Activated CD4-positive, alpha-beta memory T cell treated with anti-CD3 and anti-CD28 coated beads for 36 hours (primary cell): ENCODE measurements at regions of chr9 and their contacts with region 1.

Region 1: GRCh38 chr9:6055213-6055612 is 39.8 kb upstream of the RANBP6 start:
- DNase-seq: no peak
- H3K4me3 Mint-ChIP-seq: no peak overlapping the region
- H3K27ac Mint-ChIP-seq: no peak overlapping the region
- H3K4me1 Mint-ChIP-seq: peaks cover under 1% of the 10 kb centered on the region
- H3K27me3 Mint-ChIP-seq: no peaks in the 10 kb centered on the region

Region 2: GRCh38 chr9:5799314-5799713 is 255.9 kb before region 1 on chr9:
- CTCF ChIA-PET with region 1: interaction called, 6 read pairs
- POLR2A ChIA-PET with region 1: no interaction called
- intact Hi-C with region 1: loop called (anchors 5 kb)
- DNase-seq: no peak
- H3K4me3 Mint-ChIP-seq: no peak overlapping the region
- H3K27ac Mint-ChIP-seq: no peak overlapping the region
- H3K4me1 Mint-ChIP-seq: peaks cover 22% of the 10 kb centered on the region
- H3K27me3 Mint-ChIP-seq: no peaks in the 10 kb centered on the region

Region 3: GRCh38 chr9:6024020-6024554 is 31.1 kb before region 1 on chr9:
- CTCF ChIA-PET with region 1: interaction called, 14 read pairs
- POLR2A ChIA-PET with region 1: no interaction called
- intact Hi-C with region 1: no loop called
- DNase-seq: peak; percentile 36
- H3K4me3 Mint-ChIP-seq: peak overlapping the region; percentile 23
- H3K27ac Mint-ChIP-seq: no peak overlapping the region
- H3K4me1 Mint-ChIP-seq: peaks cover 4% of the 10 kb centered on the region
- H3K27me3 Mint-ChIP-seq: peaks cover 5% of the 10 kb centered on the region

Region 4: DNA sequence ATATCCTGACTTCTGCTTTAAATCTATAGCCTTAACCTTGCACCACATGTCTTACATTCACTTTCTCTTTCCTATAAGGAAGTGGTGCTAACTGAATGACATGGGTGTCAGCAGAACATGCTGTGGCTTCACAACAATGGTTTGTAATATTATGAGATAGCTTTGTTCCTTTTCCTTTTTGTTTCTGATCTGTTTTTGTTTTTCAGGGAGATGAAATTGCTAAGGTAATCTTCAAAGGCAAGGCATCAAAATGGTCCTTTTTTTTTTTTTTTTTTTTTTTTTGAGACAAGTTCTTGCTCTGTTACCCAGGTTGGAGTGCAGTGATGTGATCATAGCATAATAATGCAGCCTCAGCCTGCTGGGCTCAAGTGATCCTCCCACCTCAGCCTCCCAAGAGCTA is 13.8 kb after region 1 on chr9:
- CTCF ChIA-PET with region 1: interaction called, 28 read pairs
- POLR2A ChIA-PET with region 1: no interaction called
- intact Hi-C with region 1: no loop called
- DNase-seq: no peak
- H3K4me3 Mint-ChIP-seq: no peak overlapping the region
- H3K27ac Mint-ChIP-seq: peak overlapping the region; percentile 66
- H3K4me1 Mint-ChIP-seq: peaks cover 18% of the 10 kb centered on the region
- H3K27me3 Mint-ChIP-seq: no peaks in the 10 kb centered on the region

Region 5: GRCh38 chr9:6114424-6114823 is 59.2 kb after region 1 on chr9:
- CTCF ChIA-PET with region 1: no interaction called
- POLR2A ChIA-PET with region 1: no interaction called
- intact Hi-C with region 1: no loop called
- DNase-seq: no peak
- H3K4me3 Mint-ChIP-seq: no peak overlapping the region
- H3K27ac Mint-ChIP-seq: no peak overlapping the region
- H3K4me1 Mint-ChIP-seq: peaks cover 8% of the 10 kb centered on the region
- H3K27me3 Mint-ChIP-seq: no peaks in the 10 kb centered on the region

Region 6: DNA sequence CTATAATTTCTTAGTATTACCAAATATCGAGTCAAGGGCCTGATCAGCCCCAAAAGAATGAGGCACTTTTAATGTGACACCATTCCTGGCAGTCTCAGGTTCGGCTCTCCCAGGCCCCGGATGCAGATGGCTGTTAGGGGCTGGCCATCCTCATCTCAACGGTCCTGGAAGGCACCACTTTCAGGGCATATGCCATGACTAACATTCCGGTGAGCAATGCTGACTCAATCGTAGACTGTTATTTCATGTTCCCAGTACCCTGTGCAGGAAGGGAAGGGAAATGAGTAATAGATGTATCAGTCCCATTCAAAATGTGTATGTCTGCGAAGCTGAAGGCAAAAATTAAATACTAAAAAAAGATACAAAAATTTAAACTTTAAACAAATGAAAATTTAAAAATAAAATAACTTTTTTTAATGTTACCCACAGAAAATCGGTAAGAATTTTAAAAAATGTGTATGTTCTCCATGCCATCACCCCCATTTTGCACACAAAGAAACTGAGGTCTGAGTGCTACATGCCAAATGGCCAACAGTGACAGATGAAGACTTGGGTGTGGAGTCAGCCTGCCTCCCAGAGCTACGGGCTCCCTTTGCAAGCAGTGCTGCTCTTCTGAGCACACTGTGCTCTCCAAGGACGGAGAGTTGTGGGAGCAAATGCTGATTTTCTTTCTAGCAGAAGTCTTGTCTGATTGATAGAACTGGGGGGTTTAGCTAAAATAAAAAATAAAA is 511.4 kb after region 1 on chr9:
- CTCF ChIA-PET with region 1: interaction called, 6 read pairs
- POLR2A ChIA-PET with region 1: no interaction called
- intact Hi-C with region 1: loop called (anchors 1 kb)
- DNase-seq: peak; percentile 80
- H3K4me3 Mint-ChIP-seq: no peak overlapping the region
- H3K27ac Mint-ChIP-seq: peak overlapping the region; percentile 88
- H3K4me1 Mint-ChIP-seq: peaks cover 24% of the 10 kb centered on the region
- H3K27me3 Mint-ChIP-seq: peaks cover 3% of the 10 kb centered on the region